Endothelial cell of umbilical vein (primary cell): ENCODE measurements at regions of chr17 and their contacts with region 1.

Region 1: GRCh38 chr17:28951991-28952975 is 965 bp upstream of the PHF12 start:
- DNase-seq: peak; percentile 100
- H3K4me3 ChIP-seq: peak overlapping the region in 2 of 3 experiments; percentile 65 to 72
- H3K27ac ChIP-seq: peak overlapping the region; percentile 80
- H3K4me1 ChIP-seq: peaks cover 17% of the 10 kb centered on the region
- H3K27me3 ChIP-seq: no peaks in the 10 kb centered on the region
- CTCF ChIP-seq: no peak
- POLR2A ChIP-seq: peak; percentile 17

Region 2: GRCh38 chr17:28717578-28718333 is 234.5 kb before region 1 on chr17 and contains the start of gene RAB34:
- CTCF ChIA-PET with region 1: interaction called, 10 read pairs
- POLR2A ChIA-PET with region 1: interaction called, 5 read pairs
- dilution Hi-C with region 1: no loop called
- intact Hi-C with region 1: loop called (anchors 2 kb)
- DNase-seq: peak; percentile 60
- H3K4me3 ChIP-seq: peak within 1 kb of the TSS; percentile 19 to 60 (median 44)
- H3K27ac ChIP-seq: peak within 1 kb of the TSS; percentile 76
- H3K4me1 ChIP-seq: peaks cover 34% of the 10 kb centered on the region
- H3K27me3 ChIP-seq: no peaks in the 10 kb centered on the region
- CTCF ChIP-seq: peak; percentile 33 to 47
- POLR2A ChIP-seq: peak; percentile 46
- total RNA-seq, gene RAB34: 62.3 and 87.1 TPM in 2 replicates

Region 3: GRCh38 chr17:28849281-28849680 is 103.0 kb before region 1 on chr17:
- CTCF ChIA-PET with region 1: interaction called, 12 read pairs
- POLR2A ChIA-PET with region 1: no interaction called
- dilution Hi-C with region 1: no loop called
- intact Hi-C with region 1: loop called (anchors 1 kb)
- DNase-seq: peak; percentile 23
- H3K4me3 ChIP-seq: no peak overlapping the region
- H3K27ac ChIP-seq: no peak overlapping the region
- H3K4me1 ChIP-seq: peaks cover 2% of the 10 kb centered on the region
- H3K27me3 ChIP-seq: no peaks in the 10 kb centered on the region
- CTCF ChIP-seq: no peak
- POLR2A ChIP-seq: no peak

Region 4: GRCh38 chr17:28902819-28903545 is 49.3 kb before region 1 on chr17 and contains the start of gene DHRS13:
- CTCF ChIA-PET with region 1: interaction called, 17 read pairs
- POLR2A ChIA-PET with region 1: no interaction called
- dilution Hi-C with region 1: no loop called
- intact Hi-C with region 1: loop called (anchors 5 kb)
- DNase-seq: peak; percentile 93
- H3K4me3 ChIP-seq: peak within 1 kb of the TSS; percentile 45 to 67 (median 59)
- H3K27ac ChIP-seq: peak within 1 kb of the TSS; percentile 15
- H3K4me1 ChIP-seq: peaks cover 13% of the 10 kb centered on the region
- H3K27me3 ChIP-seq: no peaks in the 10 kb centered on the region
- CTCF ChIP-seq: peak; percentile 87 to 99
- POLR2A ChIP-seq: no peak
- total RNA-seq, gene DHRS13: 5.6 and 7.2 TPM in 2 replicates

Region 5: GRCh38 chr17:28916302-28916934 is 35.9 kb before region 1 on chr17:
- CTCF ChIA-PET with region 1: interaction called, 34 read pairs
- POLR2A ChIA-PET with region 1: no interaction called
- dilution Hi-C with region 1: no loop called
- intact Hi-C with region 1: loop called (anchors 1 kb)
- DNase-seq: peak; percentile 50
- H3K4me3 ChIP-seq: no peak overlapping the region
- H3K27ac ChIP-seq: no peak overlapping the region
- H3K4me1 ChIP-seq: peaks cover 13% of the 10 kb centered on the region
- H3K27me3 ChIP-seq: no peaks in the 10 kb centered on the region
- CTCF ChIP-seq: peak; percentile 46
- POLR2A ChIP-seq: no peak

Region 6: GRCh38 chr17:28967221-28968140 is 15.2 kb after region 1 on chr17:
- CTCF ChIA-PET with region 1: interaction called, 59 read pairs
- POLR2A ChIA-PET with region 1: interaction called, 4 read pairs
- dilution Hi-C with region 1: no loop called
- intact Hi-C with region 1: no loop called
- DNase-seq: no peak
- H3K4me3 ChIP-seq: no peak overlapping the region
- H3K27ac ChIP-seq: no peak overlapping the region
- H3K4me1 ChIP-seq: peaks cover 4% of the 10 kb centered on the region
- H3K27me3 ChIP-seq: no peaks in the 10 kb centered on the region
- CTCF ChIP-seq: no peak
- POLR2A ChIP-seq: no peak